Activated CD4-positive, alpha-beta T cell treated with anti-CD3 and anti-CD28 coated beads for 36 hours (primary cell): ENCODE measurements at regions of chr6 and their contacts with region 1.

Region 1: GRCh38 chr6:106444777-106445507 is 84.4 kb downstream of the CRYBG1 start:
- DNase-seq: no peak
- ATAC-seq: peak; percentile 88
- H3K4me3 Mint-ChIP-seq: no peak overlapping the region
- H3K27ac Mint-ChIP-seq: no peak overlapping the region
- H3K4me1 Mint-ChIP-seq: peaks cover 19% of the 10 kb centered on the region
- H3K27me3 Mint-ChIP-seq: peaks cover 25% of the 10 kb centered on the region

Region 2: GRCh38 chr6:106005954-106006353 is 439.0 kb before region 1 on chr6:
- CTCF ChIA-PET with region 1: no interaction called
- POLR2A ChIA-PET with region 1: no interaction called
- intact Hi-C with region 1: no loop called
- DNase-seq: no peak
- ATAC-seq: no peak
- H3K4me3 Mint-ChIP-seq: no peak overlapping the region
- H3K27ac Mint-ChIP-seq: no peak overlapping the region
- H3K4me1 Mint-ChIP-seq: no peaks in the 10 kb centered on the region
- H3K27me3 Mint-ChIP-seq: peaks cover 35% of the 10 kb centered on the region

Region 3: DNA sequence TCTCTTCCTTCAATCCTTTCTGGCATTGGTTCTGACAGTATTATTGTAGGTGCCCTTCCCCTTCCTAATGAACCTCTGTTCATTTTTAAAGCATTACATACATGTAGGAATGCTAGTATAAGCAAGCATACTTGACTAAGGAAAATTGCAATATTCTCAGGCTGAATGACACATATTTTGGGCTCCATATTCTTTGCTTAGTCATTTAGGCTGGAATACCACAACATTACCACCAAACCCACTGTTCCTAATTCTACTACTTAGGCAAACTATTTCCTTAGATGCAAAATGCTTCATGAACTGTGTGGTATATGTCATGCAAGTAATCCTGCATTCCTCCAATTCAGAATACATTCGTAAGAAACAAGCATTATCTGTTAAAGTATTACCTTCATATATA is 244.9 kb before region 1 on chr6:
- CTCF ChIA-PET with region 1: no interaction called
- POLR2A ChIA-PET with region 1: no interaction called
- intact Hi-C with region 1: no loop called
- DNase-seq: no peak
- ATAC-seq: no peak
- H3K4me3 Mint-ChIP-seq: no peak overlapping the region
- H3K27ac Mint-ChIP-seq: no peak overlapping the region
- H3K4me1 Mint-ChIP-seq: peaks cover 32% of the 10 kb centered on the region
- H3K27me3 Mint-ChIP-seq: no peaks in the 10 kb centered on the region

Region 4: DNA sequence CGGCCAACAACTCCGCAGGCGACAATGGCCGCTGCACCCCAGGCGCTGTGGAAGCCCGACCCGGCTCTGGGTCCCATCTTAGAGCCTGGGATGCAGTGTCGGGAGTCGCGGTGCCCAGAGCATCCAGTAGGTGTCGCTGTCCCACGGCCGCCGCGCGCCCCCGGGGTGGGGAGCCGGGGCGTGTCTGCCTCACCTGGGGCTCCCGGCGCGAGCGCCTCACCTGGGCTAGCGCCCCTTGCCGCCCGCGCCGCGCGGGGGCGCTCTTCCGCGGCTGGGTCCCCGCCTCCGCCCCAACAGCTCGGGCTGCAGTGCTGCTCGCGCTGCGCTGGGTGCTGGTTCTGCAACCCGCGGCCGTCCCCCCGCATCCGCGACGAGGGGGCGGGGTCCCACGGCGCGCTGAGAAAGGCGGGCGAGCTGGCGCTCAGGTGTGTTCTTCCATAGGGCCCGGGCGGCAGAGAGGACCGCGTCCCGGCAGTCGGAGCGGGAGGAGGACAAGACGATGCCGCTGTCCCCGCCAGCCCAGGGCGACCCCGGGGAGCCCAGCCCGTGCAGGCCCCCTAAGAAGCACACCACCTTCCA is 84.4 kb before region 1 on chr6 and contains the start of gene CRYBG1:
- CTCF ChIA-PET with region 1: interaction called, 3 read pairs
- POLR2A ChIA-PET with region 1: no interaction called
- intact Hi-C with region 1: loop called in 1 of 2 experiments (anchors 5 kb)
- DNase-seq: peak; percentile 84
- ATAC-seq: peak; percentile 94
- H3K4me3 Mint-ChIP-seq: peak within 1 kb of the TSS; percentile 69
- H3K27ac Mint-ChIP-seq: peak within 1 kb of the TSS; percentile 19
- H3K4me1 Mint-ChIP-seq: peaks cover 11% of the 10 kb centered on the region
- H3K27me3 Mint-ChIP-seq: peaks cover 44% of the 10 kb centered on the region
- total RNA-seq, gene CRYBG1: 26.2 to 26.6 TPM

Region 5: DNA sequence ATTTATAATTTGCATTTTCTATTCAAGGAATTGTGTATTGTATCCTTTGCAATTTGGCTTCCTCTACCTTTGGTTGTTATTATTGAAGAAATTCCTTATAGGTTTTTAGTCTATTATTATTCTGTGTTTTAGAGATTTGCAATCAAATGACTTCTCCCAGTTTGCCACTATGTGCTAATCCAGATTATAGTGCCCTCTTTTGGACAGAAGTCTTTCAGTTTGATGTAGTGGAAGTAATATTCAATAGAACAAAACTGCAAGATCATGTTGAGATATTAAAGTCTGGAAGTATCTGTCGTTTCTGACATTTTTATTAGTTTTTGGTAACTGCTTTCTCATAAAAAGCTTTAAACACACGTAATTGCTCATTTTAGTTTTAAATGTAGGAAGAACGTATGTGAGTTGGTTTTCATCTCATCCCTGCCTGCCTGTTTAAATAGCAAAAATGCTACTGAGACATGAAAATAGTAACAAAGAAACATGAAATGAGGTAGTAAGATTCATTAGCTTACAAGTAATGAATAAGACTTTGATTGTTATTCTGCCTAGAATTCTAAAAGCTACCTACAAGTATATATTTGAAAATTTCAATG is 111.5 kb after region 1 on chr6:
- CTCF ChIA-PET with region 1: interaction called, 51 read pairs
- POLR2A ChIA-PET with region 1: no interaction called
- intact Hi-C with region 1: loop called in 1 of 2 experiments (anchors 2 kb)
- DNase-seq: no peak
- ATAC-seq: no peak
- H3K4me3 Mint-ChIP-seq: no peak overlapping the region
- H3K27ac Mint-ChIP-seq: peak overlapping the region; percentile 13
- H3K4me1 Mint-ChIP-seq: peaks cover 31% of the 10 kb centered on the region
- H3K27me3 Mint-ChIP-seq: no peaks in the 10 kb centered on the region

Region 6: GRCh38 chr6:106586815-106587415 is 142.0 kb after region 1 on chr6:
- CTCF ChIA-PET with region 1: interaction called, 15 read pairs
- POLR2A ChIA-PET with region 1: no interaction called
- intact Hi-C with region 1: no loop called
- DNase-seq: no peak
- ATAC-seq: peak; percentile 42
- H3K4me3 Mint-ChIP-seq: no peak overlapping the region
- H3K27ac Mint-ChIP-seq: no peak overlapping the region
- H3K4me1 Mint-ChIP-seq: no peaks in the 10 kb centered on the region
- H3K27me3 Mint-ChIP-seq: no peaks in the 10 kb centered on the region

Region 7: GRCh38 chr6:106799008-106799894 is 354.3 kb after region 1 on chr6:
- CTCF ChIA-PET with region 1: no interaction called
- POLR2A ChIA-PET with region 1: no interaction called
- intact Hi-C with region 1: no loop called
- DNase-seq: no peak
- ATAC-seq: no peak
- H3K4me3 Mint-ChIP-seq: no peak overlapping the region
- H3K27ac Mint-ChIP-seq: no peak overlapping the region
- H3K4me1 Mint-ChIP-seq: no peaks in the 10 kb centered on the region
- H3K27me3 Mint-ChIP-seq: peaks cover 20% of the 10 kb centered on the region

Region 8: DNA sequence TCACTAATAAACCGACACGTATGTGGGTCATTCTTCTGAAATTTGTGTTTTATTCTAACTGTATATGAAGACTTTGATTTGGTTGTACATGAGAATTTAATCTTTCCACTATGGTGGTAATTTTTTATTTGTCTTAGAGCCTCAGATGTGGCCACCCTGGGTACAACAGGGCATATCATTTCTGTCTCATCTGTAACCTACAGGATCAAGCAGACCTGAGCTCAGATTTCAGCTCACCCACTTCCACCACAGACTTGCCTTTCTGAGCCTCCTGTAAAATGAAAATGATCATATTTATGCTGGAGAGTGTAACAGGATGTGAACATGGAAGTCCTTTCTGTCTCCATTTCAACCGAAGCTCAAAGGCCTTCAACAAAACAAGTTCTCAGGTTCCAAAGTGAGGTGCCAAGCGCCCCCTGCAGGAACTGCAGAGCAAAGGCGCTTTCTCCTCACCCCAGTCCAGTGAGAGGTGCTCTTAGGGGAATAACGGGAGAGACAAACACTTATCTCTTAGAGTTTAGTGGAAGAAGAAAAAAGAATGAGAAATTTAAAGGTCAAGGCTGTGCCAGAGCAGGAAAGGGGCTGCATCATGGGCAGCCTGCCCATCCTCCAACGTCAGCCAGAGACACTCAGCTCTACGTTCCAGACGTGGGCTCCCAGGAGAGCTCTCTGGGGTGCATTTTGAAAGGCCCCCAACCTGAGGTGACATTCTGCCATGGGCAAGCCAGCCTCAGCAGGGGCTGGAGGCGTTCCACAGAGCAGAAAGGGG is 552.6 kb after region 1 on chr6:
- CTCF ChIA-PET with region 1: interaction called, 5 read pairs
- POLR2A ChIA-PET with region 1: no interaction called
- intact Hi-C with region 1: loop called in 1 of 2 experiments (anchors 5 kb)
- DNase-seq: peak; percentile 80
- ATAC-seq: peak; percentile 63
- H3K4me3 Mint-ChIP-seq: no peak overlapping the region
- H3K27ac Mint-ChIP-seq: no peak overlapping the region
- H3K4me1 Mint-ChIP-seq: no peaks in the 10 kb centered on the region
- H3K27me3 Mint-ChIP-seq: peaks cover under 1% of the 10 kb centered on the region